ENCODE measurements at regions of chr20 and their contacts with region 1.

Region 1: DNA sequence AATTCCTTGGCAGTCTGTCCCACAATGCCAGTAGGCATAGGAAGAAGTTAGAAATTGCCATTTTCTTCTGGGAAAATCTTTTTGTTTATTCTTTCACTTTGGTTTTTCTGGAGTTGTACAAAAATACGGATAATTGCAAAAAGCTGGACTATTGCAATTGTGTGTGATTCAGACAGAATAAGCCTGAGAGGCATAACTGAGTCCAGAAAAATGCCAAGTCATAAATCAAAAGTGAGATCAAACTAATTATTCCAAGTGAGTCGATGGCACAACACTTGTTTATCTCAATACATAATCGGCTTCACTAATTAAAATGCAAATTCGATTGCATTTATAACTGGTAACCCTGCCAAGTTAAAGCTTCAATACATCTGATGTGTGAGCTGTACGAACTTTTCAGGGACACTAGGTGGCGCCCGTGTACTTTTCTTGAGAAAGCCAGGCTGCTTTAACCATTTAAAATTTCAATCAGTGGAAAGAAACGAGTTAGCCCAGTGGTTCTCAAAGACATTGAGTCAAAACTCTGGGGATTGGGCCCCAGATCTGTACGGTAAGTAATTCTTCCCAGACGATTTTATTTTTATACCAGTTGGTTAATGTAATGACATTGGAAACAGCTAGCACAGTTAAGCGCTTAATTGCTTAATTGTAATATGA is 102.6 kb downstream of the LAMP5 start:
- DNase-seq: peak; percentile 62
- H3K4me3 ChIP-seq: no peak overlapping the region
- H3K27ac ChIP-seq: no peak overlapping the region
- H3K4me1 ChIP-seq: no peaks in the 10 kb centered on the region
- H3K27me3 ChIP-seq: peaks cover 7 to 8% of the 10 kb centered on the region in 2 experiments
- CTCF ChIP-seq: peak; percentile 69 to 70
- POLR2A ChIP-seq: no peak

Region 2: DNA sequence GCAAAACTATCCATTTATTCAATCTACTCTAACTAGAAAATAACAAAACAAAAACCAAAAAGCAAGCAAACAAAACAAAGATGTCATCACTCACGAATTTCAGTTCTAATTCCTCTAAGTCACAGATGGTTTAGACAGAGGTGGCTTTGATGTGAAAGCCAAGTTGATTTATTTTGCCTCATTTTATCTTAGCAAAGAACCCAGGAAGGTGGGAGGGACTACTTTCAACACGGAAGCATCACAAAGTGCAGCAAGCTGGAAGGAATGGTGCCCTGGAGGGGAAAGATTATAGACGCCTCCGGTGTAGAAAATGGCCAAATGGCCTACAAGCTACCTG is 14.1 kb before region 1 on chr20:
- CTCF ChIA-PET with region 1: interaction called, 15 read pairs
- POLR2A ChIA-PET with region 1: no interaction called
- dilution Hi-C with region 1: no loop called
- intact Hi-C with region 1: no loop called
- DNase-seq: no peak
- H3K4me3 ChIP-seq: no peak overlapping the region
- H3K27ac ChIP-seq: no peak overlapping the region
- H3K4me1 ChIP-seq: no peaks in the 10 kb centered on the region
- H3K27me3 ChIP-seq: no peaks in the 10 kb centered on the region
- CTCF ChIP-seq: no peak
- POLR2A ChIP-seq: no peak

Region 3: GRCh38 chr20:9672981-9673380 is 56.0 kb after region 1 on chr20:
- CTCF ChIA-PET with region 1: no interaction called
- POLR2A ChIA-PET with region 1: no interaction called
- dilution Hi-C with region 1: no loop called
- intact Hi-C with region 1: no loop called
- DNase-seq: no peak
- H3K4me3 ChIP-seq: no peak overlapping the region
- H3K27ac ChIP-seq: no peak overlapping the region
- H3K4me1 ChIP-seq: no peaks in the 10 kb centered on the region
- H3K27me3 ChIP-seq: no peaks in the 10 kb centered on the region
- CTCF ChIP-seq: no peak
- POLR2A ChIP-seq: no peak

Region 4: GRCh38 chr20:9912858-9913434 is 296.0 kb after region 1 on chr20:
- CTCF ChIA-PET with region 1: interaction called, 111 read pairs
- POLR2A ChIA-PET with region 1: no interaction called
- dilution Hi-C with region 1: no loop called
- intact Hi-C with region 1: loop called (anchors 1 kb)
- DNase-seq: peak; percentile 63
- H3K4me3 ChIP-seq: no peak overlapping the region
- H3K27ac ChIP-seq: no peak overlapping the region
- H3K4me1 ChIP-seq: no peaks in the 10 kb centered on the region
- H3K27me3 ChIP-seq: peaks cover 4 to 6% of the 10 kb centered on the region in 2 experiments
- CTCF ChIP-seq: peak; percentile 69 to 72
- POLR2A ChIP-seq: no peak

Region 5: DNA sequence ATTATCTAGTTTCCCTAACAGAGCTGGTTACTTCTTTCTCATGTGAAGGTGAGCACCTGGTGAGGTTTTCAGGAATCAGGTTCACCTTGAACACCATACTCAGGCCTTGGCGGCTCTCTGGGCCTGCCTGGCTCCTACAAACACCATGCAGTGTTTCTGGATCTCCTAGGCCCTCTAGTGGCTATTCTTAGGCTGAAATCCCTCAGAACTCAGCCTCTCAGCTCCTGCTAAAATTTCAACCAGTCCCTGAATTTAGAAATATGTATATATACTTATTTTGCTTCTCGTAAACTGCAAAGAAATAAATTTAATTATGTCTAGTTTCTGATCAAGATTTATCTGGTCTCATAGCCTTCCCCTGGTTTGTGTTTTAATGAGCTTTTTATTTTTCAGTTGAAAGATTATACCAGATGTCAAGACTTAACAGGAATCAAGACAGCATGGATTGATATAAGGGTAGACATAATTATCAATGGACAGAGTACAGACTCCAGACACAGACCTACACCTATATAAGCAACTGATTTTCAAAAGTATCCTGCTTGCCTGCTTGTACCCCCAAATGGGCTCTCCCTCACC is 473.7 kb after region 1 on chr20:
- CTCF ChIA-PET with region 1: interaction called, 39 read pairs
- POLR2A ChIA-PET with region 1: no interaction called
- dilution Hi-C with region 1: no loop called
- intact Hi-C with region 1: loop called (anchors 1 kb)
- DNase-seq: peak; percentile 67
- H3K4me3 ChIP-seq: no peak overlapping the region
- H3K27ac ChIP-seq: no peak overlapping the region
- H3K4me1 ChIP-seq: no peaks in the 10 kb centered on the region
- H3K27me3 ChIP-seq: no peaks in the 10 kb centered on the region
- CTCF ChIP-seq: peak; percentile 69 to 78
- POLR2A ChIP-seq: no peak

Region 6: GRCh38 chr20:10381493-10381892 is 764.5 kb after region 1 on chr20:
- CTCF ChIA-PET with region 1: no interaction called
- POLR2A ChIA-PET with region 1: no interaction called
- dilution Hi-C with region 1: no loop called
- intact Hi-C with region 1: loop called (anchors 5 kb)
- DNase-seq: peak; percentile 31
- H3K4me3 ChIP-seq: no peak overlapping the region
- H3K27ac ChIP-seq: no peak overlapping the region
- H3K4me1 ChIP-seq: peaks cover 7% of the 10 kb centered on the region
- H3K27me3 ChIP-seq: no peaks in the 10 kb centered on the region
- CTCF ChIP-seq: peak in 1 of 2 donors; percentile 15
- POLR2A ChIP-seq: no peak

Region 7: GRCh38 chr20:11544029-11544678 is 1927.2 kb after region 1 on chr20:
- CTCF ChIA-PET with region 1: interaction called, 27 read pairs
- POLR2A ChIA-PET with region 1: no interaction called
- dilution Hi-C with region 1: no loop called
- intact Hi-C with region 1: loop called (anchors 1 kb)
- DNase-seq: peak; percentile 74
- H3K4me3 ChIP-seq: no peak overlapping the region
- H3K27ac ChIP-seq: no peak overlapping the region
- H3K4me1 ChIP-seq: peaks cover 9% of the 10 kb centered on the region
- H3K27me3 ChIP-seq: no peaks in the 10 kb centered on the region
- CTCF ChIP-seq: peak; percentile 16 to 44
- POLR2A ChIP-seq: no peak

Measured in endothelial cell of umbilical vein (primary cell).